Left colon (tissue), 2 donors: ENCODE measurements at regions of chr14 and their contacts with region 1.

Region 1: DNA sequence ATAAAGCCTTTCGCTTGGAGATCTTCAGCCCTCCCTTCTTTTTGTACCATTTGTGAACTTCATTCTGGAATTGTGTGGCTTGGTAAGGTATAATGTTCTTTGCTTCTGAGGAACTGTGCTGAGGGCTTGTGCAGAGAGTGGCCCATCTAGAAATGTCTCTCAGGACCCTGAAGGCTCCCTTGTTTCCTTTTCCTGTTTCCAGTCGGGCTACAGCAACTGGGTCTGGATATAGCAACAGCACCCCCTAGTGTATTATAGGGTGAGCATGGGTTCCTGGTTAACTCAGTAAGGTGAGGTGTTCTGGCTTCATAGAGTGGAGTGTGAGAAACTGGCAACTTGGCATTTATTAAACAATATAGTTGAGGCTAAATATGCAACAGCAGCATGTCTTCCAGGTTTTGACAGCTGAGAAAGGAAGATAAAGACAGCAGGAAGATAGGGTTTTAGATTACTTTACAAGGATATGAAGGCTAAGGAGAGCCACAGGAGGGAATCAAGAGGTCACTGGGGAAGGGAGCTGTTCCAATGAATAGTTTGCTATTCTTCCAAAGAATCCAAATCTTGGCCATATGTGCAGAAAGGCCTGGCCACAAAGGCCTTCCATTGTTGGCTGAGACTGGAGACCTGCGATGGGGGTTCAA is 49.1 kb upstream of the RNU6-8 start:
- DNase-seq: peak; percentile 28 to 41
- ATAC-seq: peak; percentile 90

Region 2: GRCh38 chr14:31510222-31510621 is 741.9 kb before region 1 on chr14:
- intact Hi-C with region 1: loop called in 1 of 2 experiments (anchors 5 kb)
- DNase-seq: no peak
- ATAC-seq: peak; percentile 36

Region 3: DNA sequence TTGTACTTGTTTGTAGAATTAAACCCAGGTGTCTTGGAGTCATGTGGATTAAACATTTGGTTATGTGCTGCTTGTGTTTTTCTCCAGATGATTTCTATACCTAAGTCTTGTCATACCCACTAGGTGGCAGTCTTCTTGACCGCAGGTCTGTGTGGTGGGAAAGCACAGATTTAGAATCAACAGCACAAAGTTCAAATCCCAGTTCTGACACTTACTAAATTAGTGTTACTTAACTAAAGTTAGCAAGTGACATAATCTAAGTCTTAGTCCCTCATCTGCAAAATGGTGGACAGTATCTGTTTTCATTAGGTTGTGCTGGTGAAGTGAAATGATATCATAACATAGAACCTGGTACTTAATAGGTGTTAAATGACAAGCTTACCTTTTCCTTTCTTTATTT is 326.0 kb before region 1 on chr14:
- intact Hi-C with region 1: loop called in 1 of 2 experiments (anchors 2 kb)
- DNase-seq: no peak
- ATAC-seq: peak; percentile 62